CD4-positive, alpha-beta memory T cell (primary cell): ENCODE measurements at regions of chr12 and their contacts with region 1.

Region 1: DNA sequence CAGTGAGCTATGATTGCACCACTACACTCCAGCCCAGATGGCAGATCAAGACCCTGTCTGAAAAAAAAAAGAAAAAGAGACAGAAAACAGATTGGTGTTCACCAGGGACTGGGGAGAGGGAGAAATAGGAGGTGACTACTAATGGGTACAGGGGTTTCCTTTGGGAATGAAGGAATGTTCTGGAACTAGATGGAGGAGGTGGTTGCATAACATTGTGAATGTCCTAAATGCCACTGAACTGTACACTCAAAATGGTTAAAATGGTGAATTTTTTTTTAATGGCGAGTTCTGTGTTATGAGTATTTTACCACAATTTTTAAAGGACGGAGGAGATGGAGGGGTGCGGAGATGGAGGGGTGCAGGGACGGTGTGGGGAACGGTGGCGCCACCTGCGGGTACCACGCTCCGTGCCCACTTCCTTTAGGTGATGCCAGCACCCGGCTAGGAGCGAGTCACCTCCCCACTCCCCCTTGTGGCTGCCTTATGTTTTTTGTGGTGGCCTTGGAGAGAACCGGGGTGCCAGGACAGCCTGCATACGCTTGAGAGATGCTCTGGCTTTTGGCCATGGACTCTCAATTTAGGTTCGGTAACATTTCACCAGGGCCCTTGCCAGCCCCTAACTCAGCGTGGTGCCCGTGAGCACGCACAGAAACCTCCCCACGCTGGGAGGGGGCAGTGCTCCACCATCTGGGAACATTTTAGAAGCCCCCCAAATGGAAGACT is 16.1 kb downstream of the UBC start:
- DNase-seq: peak; percentile 62 to 76 (median 67)
- H3K4me3 ChIP-seq: no peak overlapping the region
- H3K4me3 Mint-ChIP-seq: peak overlapping the region; percentile 39 to 74 (median 56)
- H3K27ac ChIP-seq: no peak overlapping the region
- H3K27ac Mint-ChIP-seq: peak overlapping the region in 3 of 7 donors; percentile 28 to 55 (median 49)
- H3K4me1 ChIP-seq: peaks cover 9% of the 10 kb centered on the region
- H3K4me1 Mint-ChIP-seq: peaks cover 9 to 17% (median 12%) of the 10 kb centered on the region in 4 donors
- H3K27me3 ChIP-seq: no peaks in the 10 kb centered on the region
- H3K27me3 Mint-ChIP-seq: no peaks in the 10 kb centered on the region

Region 2: GRCh38 chr12:124713436-124714082 is 184.8 kb before region 1 on chr12:
- CTCF ChIA-PET with region 1: no interaction called
- POLR2A ChIA-PET with region 1: no interaction called
- intact Hi-C with region 1: no loop called
- DNase-seq: peak; percentile 52 to 76 (median 64)
- H3K4me3 ChIP-seq: peak overlapping the region; percentile 20 to 54
- H3K4me3 Mint-ChIP-seq: peak overlapping the region; percentile 75 to 95 (median 83)
- H3K27ac ChIP-seq: peak overlapping the region; percentile 25
- H3K27ac Mint-ChIP-seq: peak overlapping the region; percentile 77 to 93 (median 86)
- H3K4me1 ChIP-seq: peaks cover 17% of the 10 kb centered on the region
- H3K4me1 Mint-ChIP-seq: peaks cover 10 to 20% (median 13%) of the 10 kb centered on the region in 4 donors
- H3K27me3 ChIP-seq: no peaks in the 10 kb centered on the region
- H3K27me3 Mint-ChIP-seq: no peaks in the 10 kb centered on the region

Region 3: DNA sequence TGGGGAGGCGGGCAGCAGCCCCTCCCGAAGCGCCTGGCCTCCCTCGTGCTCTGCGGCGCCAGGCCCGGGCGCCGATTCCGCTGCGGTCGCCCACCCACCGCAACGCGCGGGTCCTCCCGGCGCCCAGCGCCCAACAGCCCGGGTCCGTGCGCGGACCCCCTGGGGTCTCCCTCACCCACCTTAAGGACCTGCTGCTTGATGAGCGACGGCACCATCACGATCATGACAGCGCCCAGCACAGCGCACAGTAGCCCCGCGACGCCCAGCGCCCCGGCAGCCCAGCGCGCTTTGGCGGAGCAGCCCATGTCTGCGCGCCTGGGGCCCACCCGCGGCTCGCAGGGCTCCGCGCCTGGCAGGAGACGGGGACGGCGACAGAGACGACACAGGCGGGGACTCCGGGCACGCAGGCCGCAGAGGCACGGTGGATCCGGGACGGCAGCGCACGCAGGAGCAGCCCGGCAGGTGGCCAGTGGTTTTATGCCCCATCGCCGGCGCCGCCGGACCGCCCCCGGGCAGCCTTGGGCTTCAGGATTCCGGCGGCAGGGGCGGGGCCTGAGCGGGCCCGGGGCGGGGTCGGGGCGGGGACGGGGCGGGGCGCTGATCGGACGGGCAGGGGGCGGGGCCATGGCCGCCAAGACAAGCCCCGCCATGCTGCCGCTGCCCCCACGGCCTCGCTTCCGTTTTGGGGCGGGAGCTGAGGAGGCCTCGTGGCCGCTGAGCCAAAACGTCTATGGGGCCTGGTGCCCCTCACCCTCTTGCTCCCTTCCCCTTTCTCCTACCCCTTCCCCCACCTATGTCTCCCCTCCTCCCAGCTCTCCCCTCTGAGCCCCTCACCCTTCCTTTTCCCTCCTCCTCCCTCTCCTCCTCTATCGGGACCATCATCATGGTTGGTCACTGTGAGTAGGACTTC is 34.7 kb before region 1 on chr12 and contains the start of gene SCARB1:
- CTCF ChIA-PET with region 1: no interaction called
- POLR2A ChIA-PET with region 1: no interaction called
- intact Hi-C with region 1: loop called (anchors 5 kb)
- DNase-seq: peak; percentile 68 to 76 (median 70)
- H3K4me3 ChIP-seq: peak within 1 kb of the TSS; percentile 34 to 66
- H3K4me3 Mint-ChIP-seq: peak within 1 kb of the TSS; percentile 76 to 86 (median 81)
- H3K27ac ChIP-seq: no peak within 1 kb of the TSS
- H3K27ac Mint-ChIP-seq: peak within 1 kb of the TSS in 6 of 7 donors; percentile 54 to 89 (median 81)
- H3K4me1 ChIP-seq: peaks cover 12% of the 10 kb centered on the region
- H3K4me1 Mint-ChIP-seq: peaks cover 5 to 21% (median 12%) of the 10 kb centered on the region in 4 donors
- H3K27me3 ChIP-seq: no peaks in the 10 kb centered on the region
- H3K27me3 Mint-ChIP-seq: peaks cover 0 to 3% of the 10 kb centered on the region in 2 donors
- total RNA-seq, gene SCARB1: 2.2 to 2.6 TPM

Region 4: GRCh38 chr12:124881123-124881522 is 17.2 kb before region 1 on chr12:
- CTCF ChIA-PET with region 1: no interaction called
- POLR2A ChIA-PET with region 1: no interaction called
- intact Hi-C with region 1: no loop called
- DNase-seq: no peak
- H3K4me3 ChIP-seq: no peak overlapping the region
- H3K4me3 Mint-ChIP-seq: peak overlapping the region in 5 of 8 donors; percentile 15 to 68 (median 32)
- H3K27ac ChIP-seq: no peak overlapping the region
- H3K27ac Mint-ChIP-seq: peak overlapping the region in 1 of 7 donors; percentile 80
- H3K4me1 ChIP-seq: peaks cover 4% of the 10 kb centered on the region
- H3K4me1 Mint-ChIP-seq: peaks cover 5 to 17% (median 11%) of the 10 kb centered on the region in 4 donors
- H3K27me3 ChIP-seq: no peaks in the 10 kb centered on the region
- H3K27me3 Mint-ChIP-seq: peaks cover 0 to 2% of the 10 kb centered on the region in 2 donors

Region 5: DNA sequence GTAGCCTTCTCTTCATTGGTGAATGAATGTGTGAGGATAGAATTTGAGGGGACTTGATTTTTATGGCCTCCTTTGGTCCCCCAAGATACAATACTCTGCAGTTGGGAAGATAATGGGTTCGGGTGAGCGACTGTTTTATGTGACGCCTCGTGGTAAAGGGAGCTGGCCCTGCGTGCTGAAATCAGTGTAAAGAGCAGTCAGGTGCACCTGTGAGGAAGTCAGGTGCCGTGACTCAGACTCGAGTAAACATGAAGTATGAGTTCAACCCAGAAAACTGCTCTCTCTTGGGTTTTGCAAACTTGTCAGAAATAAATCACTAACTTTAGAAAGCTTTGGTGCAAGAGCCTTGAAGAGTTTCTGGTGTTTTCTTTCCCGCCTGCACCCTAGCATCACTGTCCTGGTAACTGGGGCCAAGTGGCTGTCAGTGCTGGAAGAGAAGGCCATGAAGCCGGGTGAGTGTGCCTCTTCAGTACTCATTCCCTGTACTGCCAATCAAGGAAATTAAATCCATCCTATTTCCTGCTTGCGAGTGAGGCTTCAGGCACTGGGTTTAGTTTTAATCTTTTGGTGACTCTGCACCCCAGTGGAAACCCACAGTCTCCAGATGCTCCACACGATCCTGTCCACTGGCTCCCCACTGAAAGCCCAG is 226.1 kb after region 1 on chr12:
- CTCF ChIA-PET with region 1: no interaction called
- POLR2A ChIA-PET with region 1: no interaction called
- intact Hi-C with region 1: no loop called
- DNase-seq: no peak
- H3K4me3 ChIP-seq: no peak overlapping the region
- H3K4me3 Mint-ChIP-seq: no peak overlapping the region
- H3K27ac ChIP-seq: no peak overlapping the region
- H3K27ac Mint-ChIP-seq: no peak overlapping the region
- H3K4me1 ChIP-seq: no peaks in the 10 kb centered on the region
- H3K4me1 Mint-ChIP-seq: no peaks in the 10 kb centered on the region
- H3K27me3 ChIP-seq: no peaks in the 10 kb centered on the region
- H3K27me3 Mint-ChIP-seq: no peaks in the 10 kb centered on the region

Region 6: GRCh38 chr12:125402874-125403789 is 504.8 kb after region 1 on chr12:
- CTCF ChIA-PET with region 1: no interaction called
- POLR2A ChIA-PET with region 1: no interaction called
- intact Hi-C with region 1: no loop called
- DNase-seq: no peak
- H3K4me3 ChIP-seq: no peak overlapping the region
- H3K4me3 Mint-ChIP-seq: peak overlapping the region in 1 of 8 donors; percentile 52
- H3K27ac ChIP-seq: no peak overlapping the region
- H3K27ac Mint-ChIP-seq: no peak overlapping the region
- H3K4me1 ChIP-seq: no peaks in the 10 kb centered on the region
- H3K4me1 Mint-ChIP-seq: no peaks in the 10 kb centered on the region
- H3K27me3 ChIP-seq: no peaks in the 10 kb centered on the region
- H3K27me3 Mint-ChIP-seq: peaks cover 7% of the 10 kb centered on the region in 2 donors